ENCODE measurements at regions of chr12 and their contacts with region 1.

Region 1: DNA sequence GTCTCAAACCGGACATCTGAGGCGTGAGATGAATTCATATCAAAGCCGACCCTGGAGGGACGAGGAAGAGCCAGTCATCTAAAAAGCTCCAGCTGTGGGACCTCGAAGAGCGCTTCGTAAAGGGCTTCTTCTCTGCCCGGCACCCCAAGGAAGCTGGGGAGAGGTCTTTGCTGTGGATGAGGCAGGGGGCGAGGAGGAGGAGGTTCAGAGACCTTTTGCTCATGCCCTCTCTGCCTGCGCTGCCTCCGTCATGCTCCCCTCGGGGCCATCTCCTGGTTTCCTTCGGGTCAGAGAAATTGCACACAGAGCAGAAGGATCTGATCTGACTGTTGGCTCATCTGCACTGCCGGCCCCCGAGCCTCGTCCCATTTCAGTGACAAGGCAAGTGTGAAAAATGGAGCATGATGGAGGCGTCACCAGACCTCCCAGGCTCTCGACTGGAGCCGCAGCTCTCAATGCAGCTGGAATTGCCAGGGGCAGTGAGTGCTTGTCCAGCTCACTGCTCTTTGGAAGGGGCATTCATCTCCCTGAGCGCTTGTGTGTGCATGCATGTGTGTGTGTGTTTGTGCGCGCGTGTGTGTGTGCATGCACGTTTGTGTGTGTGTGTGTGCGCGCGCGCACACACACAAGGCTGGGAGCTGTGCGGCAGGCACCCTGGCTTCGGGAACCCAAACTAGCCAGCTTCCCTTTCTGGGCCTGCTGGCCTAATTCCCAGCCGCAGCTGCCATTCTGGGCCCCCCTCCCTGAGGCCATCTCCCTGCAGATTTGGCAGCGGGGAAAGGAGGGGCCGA is 9.2 kb downstream of the CABP1 start:
- DNase-seq: no peak
- H3K4me3 Mint-ChIP-seq: peak overlapping the region; percentile 20
- H3K27ac Mint-ChIP-seq: no peak overlapping the region
- H3K4me1 Mint-ChIP-seq: peaks cover 12% of the 10 kb centered on the region
- H3K27me3 Mint-ChIP-seq: peaks cover 41% of the 10 kb centered on the region

Region 2: DNA sequence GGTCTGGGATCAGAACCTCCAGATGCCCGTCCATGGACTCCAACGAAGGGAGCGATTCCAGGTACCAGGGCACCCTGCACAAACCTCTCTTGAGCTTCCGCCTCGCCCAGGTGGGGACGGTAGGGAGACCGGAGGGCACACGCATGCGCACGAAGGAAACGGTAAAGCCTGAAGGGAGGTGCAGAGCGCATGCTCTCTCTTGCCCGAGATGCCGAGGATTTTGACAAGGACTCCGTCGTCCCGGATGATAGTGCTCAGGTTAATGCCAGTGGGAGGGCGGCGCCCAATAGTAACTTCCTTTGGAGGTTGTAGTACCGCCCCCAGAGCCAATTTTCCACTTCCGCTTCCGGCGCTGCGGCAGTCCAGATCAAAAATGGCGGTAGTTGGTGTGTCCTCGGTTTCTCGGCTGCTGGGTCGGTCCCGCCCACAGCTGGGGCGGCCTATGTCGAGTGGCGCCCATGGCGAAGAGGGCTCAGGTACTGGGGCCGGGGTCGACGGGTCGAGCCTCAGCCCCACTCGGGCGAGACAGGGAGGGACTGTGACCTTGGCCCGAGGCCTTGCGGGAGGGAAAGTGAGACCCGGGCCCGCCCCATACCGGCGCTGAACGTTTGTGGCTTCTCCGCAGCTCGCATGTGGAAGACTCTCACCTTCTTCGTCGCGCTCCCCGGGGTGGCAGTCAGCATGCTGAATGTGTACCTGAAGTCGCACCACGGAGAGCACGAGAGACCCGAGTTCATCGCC is 211.7 kb before region 1 on chr12 and contains the start of gene COX6A1:
- CTCF ChIA-PET with region 1: interaction called, 3 read pairs
- intact Hi-C with region 1: loop called (anchors 1 kb)
- DNase-seq: peak; percentile 99
- H3K4me3 Mint-ChIP-seq: peak within 1 kb of the TSS; percentile 92
- H3K27ac Mint-ChIP-seq: peak within 1 kb of the TSS; percentile 93
- H3K4me1 Mint-ChIP-seq: peaks cover 22% of the 10 kb centered on the region
- H3K27me3 Mint-ChIP-seq: no peaks in the 10 kb centered on the region
- total RNA-seq, gene COX6A1: 536 to 540 TPM

Region 3: DNA sequence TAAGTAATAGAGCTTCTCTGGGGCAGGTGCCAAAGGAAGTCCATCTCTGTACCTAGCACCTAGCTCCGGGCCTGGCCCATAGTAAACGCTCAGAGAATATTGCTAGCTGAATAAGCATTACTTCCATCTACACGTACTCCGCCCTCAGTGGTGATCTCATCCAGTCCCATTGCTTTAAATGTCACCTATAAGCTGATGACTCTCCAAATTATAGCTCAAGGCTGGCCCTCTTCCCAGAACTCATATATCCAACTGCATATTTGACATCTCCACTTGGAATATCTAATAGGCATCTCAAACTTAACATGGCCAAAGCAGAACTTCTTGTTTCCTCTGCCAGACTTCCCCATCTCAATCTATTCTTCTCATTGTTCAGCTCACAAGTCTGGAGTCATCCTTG is 160.6 kb before region 1 on chr12:
- CTCF ChIA-PET with region 1: no interaction called
- intact Hi-C with region 1: no loop called
- DNase-seq: no peak
- H3K4me3 Mint-ChIP-seq: no peak overlapping the region
- H3K27ac Mint-ChIP-seq: no peak overlapping the region
- H3K4me1 Mint-ChIP-seq: no peaks in the 10 kb centered on the region
- H3K27me3 Mint-ChIP-seq: no peaks in the 10 kb centered on the region

Region 4: GRCh38 chr12:120620624-120621023 is 29.0 kb before region 1 on chr12:
- CTCF ChIA-PET with region 1: interaction called, 16 read pairs
- intact Hi-C with region 1: no loop called
- DNase-seq: no peak
- H3K4me3 Mint-ChIP-seq: no peak overlapping the region
- H3K27ac Mint-ChIP-seq: no peak overlapping the region
- H3K4me1 Mint-ChIP-seq: no peaks in the 10 kb centered on the region
- H3K27me3 Mint-ChIP-seq: peaks cover 13% of the 10 kb centered on the region

Region 5: DNA sequence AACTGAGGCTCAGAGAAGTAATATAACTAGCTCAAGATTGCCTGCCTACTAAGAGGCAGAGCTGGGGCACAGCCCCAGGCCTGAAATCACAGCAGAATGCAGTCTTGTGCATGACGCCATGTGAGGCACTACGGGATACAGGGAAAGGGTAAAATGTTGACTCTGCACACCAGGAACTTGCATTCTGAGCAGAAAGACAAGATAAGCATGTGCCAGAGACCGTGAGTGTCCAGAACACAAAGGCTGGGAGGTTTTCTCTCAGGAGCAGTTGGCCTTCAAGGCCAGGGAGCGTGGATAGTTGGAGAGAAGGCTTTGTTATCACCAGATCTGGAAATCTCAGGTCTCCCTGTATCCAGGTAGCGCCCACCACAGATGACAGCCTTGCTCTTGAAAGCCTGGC is 14.1 kb after region 1 on chr12:
- CTCF ChIA-PET with region 1: interaction called, 55 read pairs
- intact Hi-C with region 1: no loop called
- DNase-seq: no peak
- H3K4me3 Mint-ChIP-seq: no peak overlapping the region
- H3K27ac Mint-ChIP-seq: no peak overlapping the region
- H3K4me1 Mint-ChIP-seq: no peaks in the 10 kb centered on the region
- H3K27me3 Mint-ChIP-seq: no peaks in the 10 kb centered on the region

Region 6: GRCh38 chr12:120710031-120710804 is 60.6 kb after region 1 on chr12 and contains the start of gene UNC119B:
- CTCF ChIA-PET with region 1: interaction called, 30 read pairs
- intact Hi-C with region 1: loop called (anchors 1 kb)
- DNase-seq: peak; percentile 73
- H3K4me3 Mint-ChIP-seq: peak within 1 kb of the TSS; percentile 85
- H3K27ac Mint-ChIP-seq: peak within 1 kb of the TSS; percentile 84
- H3K4me1 Mint-ChIP-seq: peaks cover 32% of the 10 kb centered on the region
- H3K27me3 Mint-ChIP-seq: no peaks in the 10 kb centered on the region
- total RNA-seq, gene UNC119B: 31.9 to 32.6 TPM

Region 7: GRCh38 chr12:121085069-121085468 is 435.4 kb after region 1 on chr12:
- CTCF ChIA-PET with region 1: no interaction called
- intact Hi-C with region 1: no loop called
- DNase-seq: no peak
- H3K4me3 Mint-ChIP-seq: no peak overlapping the region
- H3K27ac Mint-ChIP-seq: no peak overlapping the region
- H3K4me1 Mint-ChIP-seq: peaks cover 10% of the 10 kb centered on the region
- H3K27me3 Mint-ChIP-seq: no peaks in the 10 kb centered on the region

Region 8: DNA sequence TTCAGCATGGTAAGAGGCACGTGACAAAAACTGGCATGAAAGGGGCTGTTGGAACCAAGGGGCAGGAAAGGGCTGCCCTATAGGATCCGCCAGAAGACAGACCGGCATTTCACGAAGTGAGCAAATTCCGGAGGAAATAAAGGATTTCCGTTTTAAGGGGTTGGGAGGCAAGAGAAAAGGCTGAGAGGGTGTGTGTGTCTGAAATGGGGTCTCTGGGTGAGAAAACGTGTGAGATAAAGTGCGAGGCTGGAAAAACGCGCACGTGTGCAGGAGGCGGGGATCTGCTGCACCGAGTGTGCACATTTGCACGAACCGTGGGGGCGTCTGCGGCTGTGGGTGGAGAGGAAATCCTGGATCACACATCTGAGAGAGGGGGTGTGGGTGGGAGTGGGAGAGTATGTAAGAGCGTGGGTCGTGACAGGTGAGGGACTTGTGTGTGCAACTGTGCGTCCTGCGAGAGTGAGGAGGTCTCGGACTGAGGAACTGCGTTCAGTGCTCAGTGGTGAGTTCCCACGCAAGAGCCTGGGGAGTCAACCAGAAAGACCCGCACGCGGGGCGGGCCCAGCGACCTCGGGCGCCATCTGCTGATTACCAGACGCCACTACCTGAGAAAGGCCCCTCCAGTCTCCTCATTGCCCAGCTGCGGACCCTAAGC is 446.0 kb after region 1 on chr12:
- CTCF ChIA-PET with region 1: no interaction called
- intact Hi-C with region 1: loop called (anchors 1 kb)
- DNase-seq: peak; percentile 85
- H3K4me3 Mint-ChIP-seq: peak overlapping the region; percentile 71
- H3K27ac Mint-ChIP-seq: no peak overlapping the region
- H3K4me1 Mint-ChIP-seq: peaks cover 33% of the 10 kb centered on the region
- H3K27me3 Mint-ChIP-seq: peaks cover 6% of the 10 kb centered on the region

Measured in activated naive CD4-positive, alpha-beta T cell treated with anti-CD3 and anti-CD28 coated beads for 36 hours (primary cell).